ENCODE measurements at regions of chr11 and their contacts with region 1.

Region 1: DNA sequence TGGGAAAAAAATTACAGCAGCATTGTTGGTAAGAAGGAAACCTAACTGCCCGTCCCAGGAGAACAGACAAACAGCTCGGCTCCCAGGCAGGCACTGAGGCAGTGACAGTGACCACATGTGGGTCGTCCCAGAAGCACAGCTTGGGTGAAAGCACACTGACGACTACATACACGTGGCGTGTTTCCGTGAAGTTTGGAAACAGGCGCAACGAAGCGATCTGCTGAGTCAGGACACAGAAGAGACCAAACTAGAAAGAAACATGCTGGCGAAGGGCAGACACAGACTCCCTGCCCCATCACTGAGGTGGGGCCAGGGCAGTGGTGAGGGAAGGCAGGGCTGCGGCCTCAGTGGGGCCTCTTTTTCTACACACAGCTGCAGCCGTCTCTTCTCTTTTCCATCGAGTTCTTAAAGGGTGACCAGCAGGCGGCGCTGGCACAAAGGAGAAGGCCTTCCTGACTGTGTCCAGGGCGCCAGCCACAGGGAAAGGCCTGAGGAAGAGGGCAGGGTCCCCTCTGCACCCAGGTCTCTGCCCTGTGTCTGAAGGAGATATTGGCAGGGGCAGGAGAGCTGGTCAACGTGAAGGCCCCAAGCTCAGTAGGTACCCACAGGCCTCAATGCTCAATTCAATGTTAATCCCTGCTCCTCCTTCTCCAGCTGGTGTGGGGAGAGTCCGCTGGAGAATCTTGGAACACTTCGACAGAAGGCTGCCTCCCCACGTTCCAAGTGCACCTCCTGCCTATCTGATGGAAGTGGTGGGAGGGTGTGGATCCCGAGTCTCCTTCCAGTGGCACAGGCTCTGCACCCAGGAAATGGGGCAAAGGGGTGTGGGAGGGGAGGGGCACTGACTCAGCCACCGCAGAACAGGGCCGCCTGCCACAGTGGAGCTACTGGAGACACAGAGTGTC is 19.9 kb downstream of the CARS1 start:
- DNase-seq: peak; percentile 54 to 67 (median 65)
- H3K4me3 ChIP-seq: no peak overlapping the region
- H3K27ac ChIP-seq: no peak overlapping the region
- H3K4me1 ChIP-seq: peaks cover 0 to 14% (median 5%) of the 10 kb centered on the region in 4 experiments
- H3K27me3 ChIP-seq: no peaks in the 10 kb centered on the region

Region 2: GRCh38 chr11:3014057-3014938 is 23.0 kb before region 1 on chr11:
- CTCF ChIA-PET with region 1: interaction called, 16 read pairs
- POLR2A ChIA-PET with region 1: no interaction called
- DNase-seq: no peak
- H3K4me3 ChIP-seq: no peak overlapping the region
- H3K27ac ChIP-seq: no peak overlapping the region
- H3K4me1 ChIP-seq: no peaks in the 10 kb centered on the region
- H3K27me3 ChIP-seq: no peaks in the 10 kb centered on the region

Region 3: GRCh38 chr11:3049430-3050243 is 12.3 kb after region 1 on chr11:
- CTCF ChIA-PET with region 1: interaction called, 63 read pairs
- POLR2A ChIA-PET with region 1: no interaction called
- DNase-seq: peak in 2 of 3 donors; percentile 27 to 38
- H3K4me3 ChIP-seq: no peak overlapping the region
- H3K27ac ChIP-seq: no peak overlapping the region
- H3K4me1 ChIP-seq: peaks cover 0 to 11% (median 5%) of the 10 kb centered on the region in 4 experiments
- H3K27me3 ChIP-seq: no peaks in the 10 kb centered on the region

Region 4: DNA sequence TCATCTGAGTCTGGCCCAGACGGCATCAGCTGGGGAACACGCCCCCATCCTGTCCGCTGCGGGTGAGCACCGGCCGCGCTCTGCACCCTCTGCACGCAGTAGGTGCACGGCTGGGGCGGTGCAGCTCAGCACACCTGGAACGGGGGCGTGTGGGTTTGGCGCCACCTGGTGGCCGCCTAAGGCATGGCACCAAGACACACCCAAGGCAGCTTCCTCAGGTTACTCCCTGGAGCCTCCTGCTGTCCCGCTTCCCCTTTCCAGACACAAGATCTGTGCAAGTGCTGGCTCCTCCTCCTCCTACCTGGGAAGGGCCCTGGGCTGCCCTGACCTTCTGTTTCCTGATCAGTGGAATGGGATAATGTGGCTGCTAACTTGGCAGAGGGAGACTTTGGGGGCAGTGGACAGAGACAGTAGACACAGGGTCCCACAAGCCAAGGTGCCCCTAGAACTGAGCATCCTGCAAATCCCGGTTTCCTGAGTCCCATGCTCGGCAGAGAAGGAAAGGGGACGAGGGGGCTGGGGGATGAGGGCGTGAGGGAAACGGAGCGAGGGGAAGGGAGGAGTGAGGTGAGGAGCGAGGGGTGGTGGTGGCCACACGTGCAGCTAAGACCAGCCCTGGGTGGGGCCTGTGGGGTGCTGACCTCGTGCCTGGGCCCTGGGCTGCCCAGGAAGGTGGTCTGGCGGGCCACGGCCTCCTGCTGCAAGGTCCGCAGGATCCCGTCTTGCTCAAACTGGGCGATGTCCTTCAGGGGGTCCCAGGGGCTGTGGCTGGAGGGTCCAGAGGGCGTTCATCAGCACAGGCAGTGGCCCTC is 54.7 kb after region 1 on chr11:
- CTCF ChIA-PET with region 1: interaction called, 87 read pairs
- POLR2A ChIA-PET with region 1: no interaction called
- DNase-seq: peak; percentile 43 to 54 (median 45)
- H3K4me3 ChIP-seq: no peak overlapping the region
- H3K27ac ChIP-seq: no peak overlapping the region
- H3K4me1 ChIP-seq: peaks cover 0 to 15% (median 6%) of the 10 kb centered on the region in 4 experiments
- H3K27me3 ChIP-seq: no peaks in the 10 kb centered on the region

Measured in common myeloid progenitor, CD34-positive (primary cell).